ENCODE measurements at regions of chr17 and their contacts with region 1.

Region 1: GRCh38 chr17:40113110-40113906 is 8.5 kb upstream of the MSL1 start:
- DNase-seq: peak; percentile 97
- H3K4me3 Mint-ChIP-seq: peak overlapping the region; percentile 74
- H3K27ac Mint-ChIP-seq: peak overlapping the region; percentile 78
- H3K4me1 Mint-ChIP-seq: peaks cover 39% of the 10 kb centered on the region
- H3K27me3 Mint-ChIP-seq: no peaks in the 10 kb centered on the region
- CTCF ChIP-seq: peak; percentile 55

Region 2: DNA sequence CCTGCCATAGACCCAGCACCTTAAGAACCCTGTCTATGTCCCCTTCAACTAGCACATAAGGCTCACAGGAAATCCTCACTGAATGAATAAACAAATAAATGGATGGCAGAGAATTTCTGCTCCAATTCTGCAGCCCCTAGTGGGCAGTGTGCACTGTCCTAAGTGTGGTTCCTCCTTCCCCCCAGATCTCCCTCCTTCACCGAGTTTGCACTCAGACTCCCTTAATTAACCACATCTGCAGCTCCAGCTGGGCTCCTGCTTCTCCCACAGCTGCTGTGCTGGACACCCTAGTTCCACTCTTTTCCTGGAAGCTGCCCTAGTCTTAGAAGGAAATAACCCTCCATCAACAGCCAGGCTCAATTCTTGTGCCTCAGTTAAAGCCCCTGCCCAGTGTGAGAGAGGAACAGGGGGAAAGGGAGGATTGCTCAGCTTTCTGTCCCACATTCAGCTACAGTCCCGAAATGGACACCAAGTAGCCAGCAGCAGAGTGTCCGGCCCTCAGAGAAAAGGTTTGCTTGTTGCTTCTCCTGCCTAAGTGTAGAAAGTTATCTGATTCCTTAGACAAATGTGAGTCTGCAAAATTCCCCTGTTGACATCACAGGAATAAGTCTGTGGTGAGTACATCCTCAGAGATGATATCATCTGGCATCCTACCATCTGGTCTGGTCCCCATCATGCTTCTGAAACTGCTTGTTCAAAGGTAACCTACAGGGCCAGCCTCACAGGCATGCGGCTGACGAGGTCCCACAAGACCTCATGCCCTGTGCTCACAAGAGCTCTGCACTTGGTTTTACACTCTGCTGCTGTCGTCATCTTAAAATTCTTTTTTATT is 173.5 kb before region 1 on chr17:
- CTCF ChIA-PET with region 1: no interaction called
- POLR2A ChIA-PET with region 1: no interaction called
- intact Hi-C with region 1: no loop called
- DNase-seq: no peak
- H3K4me3 Mint-ChIP-seq: no peak overlapping the region
- H3K27ac Mint-ChIP-seq: no peak overlapping the region
- H3K4me1 Mint-ChIP-seq: no peaks in the 10 kb centered on the region
- H3K27me3 Mint-ChIP-seq: peaks cover 23% of the 10 kb centered on the region
- CTCF ChIP-seq: no peak

Region 3: DNA sequence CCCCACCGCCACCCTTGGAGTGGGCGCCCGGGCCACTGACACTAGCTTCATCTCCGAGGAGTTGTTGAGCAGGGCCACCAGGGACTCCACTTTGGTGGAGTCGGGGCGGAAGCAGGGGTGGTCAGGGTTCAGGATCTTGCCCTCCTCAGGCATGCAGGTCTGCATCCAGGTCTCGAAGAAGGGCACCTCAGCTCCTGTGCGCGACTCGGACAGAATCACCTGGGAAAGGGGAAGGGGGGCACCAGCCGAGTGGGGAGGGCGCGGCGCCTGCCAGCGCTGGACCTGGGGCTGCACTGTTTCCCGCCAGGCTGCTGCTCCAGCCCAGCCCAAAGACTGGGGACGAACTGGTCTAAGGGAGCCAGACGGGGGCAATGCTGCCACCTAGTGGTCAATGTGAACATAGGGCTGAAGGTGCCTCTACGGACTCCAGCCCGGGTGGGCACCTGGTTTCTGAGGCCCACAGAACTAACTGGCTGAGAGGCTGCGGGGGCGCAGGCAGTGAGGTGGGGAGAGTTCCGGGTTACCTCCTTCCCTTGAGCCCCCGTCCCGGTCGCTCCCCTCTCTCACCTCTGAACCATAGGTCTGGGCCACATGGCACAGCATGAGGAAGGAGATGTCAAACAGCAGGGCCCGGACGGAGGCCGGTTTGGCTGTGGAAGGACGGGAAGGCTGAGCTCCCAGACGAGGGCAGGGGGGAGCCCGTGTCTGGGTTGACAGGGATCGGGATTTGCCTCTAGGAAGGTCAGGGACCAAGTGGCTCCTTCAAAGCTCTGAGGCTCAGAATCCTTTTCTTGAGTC is 86.3 kb before region 1 on chr17:
- CTCF ChIA-PET with region 1: interaction called, 32 read pairs
- POLR2A ChIA-PET with region 1: interaction called, 34 read pairs
- intact Hi-C with region 1: loop called (anchors 5 kb)
- DNase-seq: peak; percentile 95
- H3K4me3 Mint-ChIP-seq: peak overlapping the region; percentile 52
- H3K27ac Mint-ChIP-seq: peak overlapping the region; percentile 87
- H3K4me1 Mint-ChIP-seq: peaks cover 47% of the 10 kb centered on the region
- H3K27me3 Mint-ChIP-seq: no peaks in the 10 kb centered on the region
- CTCF ChIP-seq: peak; percentile 91

Region 4: DNA sequence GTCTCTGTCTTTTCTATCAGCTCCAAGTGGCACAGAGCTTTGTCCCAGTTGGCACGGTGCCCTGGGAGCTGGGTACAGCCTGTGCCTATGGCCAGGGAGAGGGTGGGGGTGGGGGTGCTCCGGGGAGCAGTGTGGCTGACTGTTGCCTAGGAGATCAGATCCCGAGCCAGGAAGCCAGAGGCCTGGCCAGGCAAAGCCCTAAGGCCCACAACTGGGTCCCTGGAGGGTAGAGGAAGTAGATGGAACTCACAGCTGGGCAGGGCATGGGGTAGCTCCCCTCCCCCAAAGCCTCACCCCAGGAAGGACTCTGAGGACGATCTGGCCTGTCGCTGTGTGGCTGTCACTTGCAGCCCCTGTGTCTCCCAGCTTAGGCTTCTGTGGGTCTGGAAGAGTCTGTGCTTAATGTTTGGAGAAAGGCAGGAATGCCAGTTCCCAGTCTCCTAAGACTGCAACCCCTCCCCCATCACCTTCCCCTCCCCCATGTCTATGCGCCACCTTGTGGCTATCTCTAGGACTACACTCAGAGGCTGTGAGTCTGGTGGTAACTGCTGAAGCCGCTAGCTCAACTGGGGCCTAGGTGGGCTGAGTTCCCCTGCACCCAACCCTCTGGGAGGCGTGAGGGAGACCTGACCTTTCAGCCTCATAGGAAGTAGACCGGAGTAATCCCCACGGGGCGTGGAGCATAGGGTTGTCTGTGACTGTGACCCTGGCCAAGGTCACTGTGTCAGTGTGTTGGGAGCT is 37.9 kb before region 1 on chr17:
- CTCF ChIA-PET with region 1: interaction called, 45 read pairs
- POLR2A ChIA-PET with region 1: interaction called, 5 read pairs
- intact Hi-C with region 1: no loop called
- DNase-seq: peak; percentile 78
- H3K4me3 Mint-ChIP-seq: peak overlapping the region; percentile 65
- H3K27ac Mint-ChIP-seq: peak overlapping the region; percentile 36
- H3K4me1 Mint-ChIP-seq: peaks cover 62% of the 10 kb centered on the region
- H3K27me3 Mint-ChIP-seq: no peaks in the 10 kb centered on the region
- CTCF ChIP-seq: peak; percentile 89

Region 5: GRCh38 chr17:40151414-40151963 is 38.2 kb after region 1 on chr17:
- CTCF ChIA-PET with region 1: interaction called, 10 read pairs
- POLR2A ChIA-PET with region 1: interaction called, 4 read pairs
- intact Hi-C with region 1: no loop called
- DNase-seq: no peak
- H3K4me3 Mint-ChIP-seq: no peak overlapping the region
- H3K27ac Mint-ChIP-seq: no peak overlapping the region
- H3K4me1 Mint-ChIP-seq: peaks cover 26% of the 10 kb centered on the region
- H3K27me3 Mint-ChIP-seq: no peaks in the 10 kb centered on the region
- CTCF ChIP-seq: no peak

Region 6: GRCh38 chr17:40191237-40192208 is 78.2 kb after region 1 on chr17:
- CTCF ChIA-PET with region 1: interaction called, 13 read pairs
- POLR2A ChIA-PET with region 1: interaction called, 19 read pairs
- intact Hi-C with region 1: no loop called
- DNase-seq: peak; percentile 66
- H3K4me3 Mint-ChIP-seq: peak overlapping the region; percentile 72
- H3K27ac Mint-ChIP-seq: no peak overlapping the region
- H3K4me1 Mint-ChIP-seq: peaks cover 18% of the 10 kb centered on the region
- H3K27me3 Mint-ChIP-seq: no peaks in the 10 kb centered on the region
- CTCF ChIP-seq: no peak

Region 7: GRCh38 chr17:41367426-41368075 is 1254.2 kb after region 1 on chr17:
- CTCF ChIA-PET with region 1: no interaction called
- POLR2A ChIA-PET with region 1: no interaction called
- intact Hi-C with region 1: no loop called
- DNase-seq: no peak
- H3K4me3 Mint-ChIP-seq: no peak overlapping the region
- H3K27ac Mint-ChIP-seq: no peak overlapping the region
- H3K4me1 Mint-ChIP-seq: no peaks in the 10 kb centered on the region
- H3K27me3 Mint-ChIP-seq: peaks cover 23% of the 10 kb centered on the region
- CTCF ChIP-seq: no peak

Measured in MCF 10A (cell line).